Endothelial cell of umbilical vein (primary cell): ENCODE measurements at regions of chr12 and their contacts with region 1.

Region 1: GRCh38 chr12:14384783-14385638 is 19.5 kb downstream of the ATF7IP start:
- DNase-seq: peak; percentile 94
- H3K4me3 ChIP-seq: peak overlapping the region in 1 of 3 experiments; percentile 16
- H3K27ac ChIP-seq: peak overlapping the region; percentile 58
- H3K4me1 ChIP-seq: peaks cover 20% of the 10 kb centered on the region
- H3K27me3 ChIP-seq: no peaks in the 10 kb centered on the region
- CTCF ChIP-seq: no peak
- POLR2A ChIP-seq: no peak

Region 2: DNA sequence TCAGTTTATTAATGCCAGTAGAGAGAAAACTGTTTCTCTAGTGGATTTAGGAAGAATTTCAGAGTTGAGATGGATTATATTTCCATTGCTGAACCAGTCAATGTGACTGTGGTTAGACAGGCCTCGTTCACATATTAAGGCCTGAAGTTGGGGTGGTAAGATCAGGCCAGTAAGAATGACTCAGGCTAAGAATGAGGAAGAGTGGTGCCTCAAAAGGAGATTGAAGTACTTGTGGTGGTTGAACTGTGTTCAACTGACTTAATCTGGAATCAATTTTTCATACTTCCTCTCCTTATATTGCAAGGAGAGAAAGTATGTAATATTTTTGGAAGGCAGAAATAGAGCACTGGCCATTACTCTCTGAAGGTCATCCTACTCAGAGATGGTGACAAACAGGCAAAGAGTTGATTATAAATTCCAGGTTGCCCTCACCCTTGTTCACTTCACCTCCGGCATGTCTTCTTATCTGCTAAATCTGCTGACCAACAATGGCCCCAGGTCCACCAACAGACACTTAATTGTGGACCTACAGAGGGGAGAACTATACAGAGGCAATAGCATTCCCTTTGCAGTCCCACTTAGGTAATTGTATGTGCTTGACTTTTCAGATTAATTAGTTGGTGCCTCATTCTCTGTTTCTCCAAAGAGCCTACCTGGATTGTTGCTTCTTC is 57.2 kb before region 1 on chr12:
- CTCF ChIA-PET with region 1: no interaction called
- POLR2A ChIA-PET with region 1: no interaction called
- dilution Hi-C with region 1: no loop called
- intact Hi-C with region 1: no loop called
- DNase-seq: no peak
- H3K4me3 ChIP-seq: no peak overlapping the region
- H3K27ac ChIP-seq: no peak overlapping the region
- H3K4me1 ChIP-seq: no peaks in the 10 kb centered on the region
- H3K27me3 ChIP-seq: no peaks in the 10 kb centered on the region
- CTCF ChIP-seq: no peak
- POLR2A ChIP-seq: no peak

Region 3: DNA sequence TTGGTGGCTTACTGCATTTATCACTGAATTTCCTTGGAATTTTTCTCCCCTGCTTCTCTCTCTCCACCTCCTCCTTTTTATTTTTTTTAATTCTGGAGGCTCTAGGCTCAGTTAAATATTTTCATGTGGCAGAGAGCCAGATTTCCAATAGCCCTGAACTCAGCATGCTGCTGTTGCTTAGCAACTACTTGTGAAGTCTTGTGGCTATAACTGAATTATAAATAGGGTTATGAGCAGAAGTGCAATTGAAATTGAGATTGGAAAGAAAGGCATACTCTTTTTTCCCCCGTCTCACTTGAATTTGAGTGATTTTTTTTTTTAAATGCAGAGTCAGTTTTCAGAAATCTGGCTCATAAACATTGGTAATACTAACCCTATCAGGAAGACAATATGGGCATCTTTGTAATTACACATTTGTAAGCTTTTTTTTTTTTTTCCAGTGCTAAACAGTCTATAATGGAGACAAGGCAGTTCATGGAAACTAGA is 18.7 kb after region 1 on chr12:
- CTCF ChIA-PET with region 1: interaction called, 6 read pairs
- POLR2A ChIA-PET with region 1: no interaction called
- dilution Hi-C with region 1: no loop called
- intact Hi-C with region 1: loop called (anchors 2 kb)
- DNase-seq: peak; percentile 77
- H3K4me3 ChIP-seq: no peak overlapping the region
- H3K27ac ChIP-seq: no peak overlapping the region
- H3K4me1 ChIP-seq: peaks cover 16% of the 10 kb centered on the region
- H3K27me3 ChIP-seq: no peaks in the 10 kb centered on the region
- CTCF ChIP-seq: no peak
- POLR2A ChIP-seq: no peak

Region 4: GRCh38 chr12:14803011-14803829 is 418.2 kb after region 1 on chr12 and contains the starts of genes C12orf60 and WBP11:
- CTCF ChIA-PET with region 1: no interaction called
- POLR2A ChIA-PET with region 1: no interaction called
- dilution Hi-C with region 1: no loop called
- intact Hi-C with region 1: loop called (anchors 1 kb)
- DNase-seq: peak; percentile 99
- H3K4me3 ChIP-seq: peak within 1 kb of the TSS; percentile 82 to 98 (median 97)
- H3K27ac ChIP-seq: peak within 1 kb of the TSS; percentile 90
- H3K4me1 ChIP-seq: peaks cover 17% of the 10 kb centered on the region
- H3K27me3 ChIP-seq: no peaks in the 10 kb centered on the region
- CTCF ChIP-seq: no peak
- POLR2A ChIP-seq: peak; percentile 92
- total RNA-seq, gene C12orf60: 1.1 and 1.3 TPM in 2 replicates
- total RNA-seq, gene WBP11: 70.5 and 77.1 TPM in 2 replicates